Activated CD4-positive, alpha-beta memory T cell treated with anti-CD3 and anti-CD28 coated beads for 36 hours (primary cell): ENCODE measurements at regions of chr1 and their contacts with region 1.

Region 1: DNA sequence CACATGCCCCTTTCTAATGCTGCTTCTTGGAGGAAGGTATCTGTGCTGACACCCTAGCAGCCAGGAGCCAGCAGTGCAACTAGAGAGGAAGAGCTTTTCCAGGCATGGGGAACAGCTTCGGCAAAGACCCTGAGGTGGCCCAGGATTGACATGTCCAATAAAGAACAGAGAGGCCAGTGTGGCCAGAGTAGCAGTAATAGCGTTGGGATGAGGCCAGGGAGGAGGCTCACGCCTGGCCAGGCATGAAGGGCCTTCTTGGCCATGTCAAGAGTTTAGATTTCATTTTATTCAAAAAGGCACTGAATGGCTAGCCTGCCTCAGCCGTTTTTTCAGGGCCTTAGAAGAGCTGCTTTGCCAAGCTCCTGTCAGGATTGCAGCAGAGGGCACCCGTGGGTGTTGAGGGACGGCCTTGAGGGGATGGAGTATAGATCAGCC is 16.3 kb upstream of the ADAMTSL4 start:
- DNase-seq: no peak
- H3K4me3 Mint-ChIP-seq: no peak overlapping the region
- H3K27ac Mint-ChIP-seq: no peak overlapping the region
- H3K4me1 Mint-ChIP-seq: no peaks in the 10 kb centered on the region
- H3K27me3 Mint-ChIP-seq: no peaks in the 10 kb centered on the region

Region 2: DNA sequence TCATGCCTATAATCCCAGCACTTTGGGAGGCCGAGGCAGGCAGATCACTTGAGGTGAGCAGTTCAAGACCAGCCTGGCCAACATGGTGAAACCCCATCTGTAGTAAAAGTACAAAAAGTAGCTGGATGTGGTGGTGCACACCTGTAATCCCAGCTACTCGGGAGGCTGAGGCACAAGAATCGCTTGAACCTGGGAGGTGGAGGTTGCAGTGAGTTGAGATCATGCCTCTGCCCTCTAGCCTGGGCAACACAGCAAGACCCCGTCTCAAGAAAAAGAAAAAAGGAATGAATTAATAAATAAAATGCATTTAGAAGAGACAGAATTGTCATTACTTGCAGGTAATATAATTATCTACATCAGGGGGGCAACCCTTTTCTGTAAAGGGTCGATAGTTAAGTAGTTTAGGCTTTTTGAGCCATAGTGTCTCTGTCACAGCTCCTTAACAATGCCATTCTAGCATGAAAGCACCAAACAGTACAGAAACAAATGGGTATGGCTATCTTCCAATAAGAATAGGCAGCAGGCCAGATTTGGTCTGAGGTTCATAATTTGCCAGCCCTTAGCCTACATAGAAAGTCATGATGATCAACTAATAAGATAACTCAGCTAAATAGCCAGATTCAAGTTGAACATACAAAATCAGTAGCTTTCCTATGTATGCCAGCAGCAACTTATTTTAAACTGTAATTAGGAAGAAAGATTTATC is 112.2 kb before region 1 on chr1:
- CTCF ChIA-PET with region 1: no interaction called
- POLR2A ChIA-PET with region 1: no interaction called
- intact Hi-C with region 1: no loop called
- DNase-seq: no peak
- H3K4me3 Mint-ChIP-seq: no peak overlapping the region
- H3K27ac Mint-ChIP-seq: no peak overlapping the region
- H3K4me1 Mint-ChIP-seq: peaks cover 24% of the 10 kb centered on the region
- H3K27me3 Mint-ChIP-seq: no peaks in the 10 kb centered on the region

Region 3: GRCh38 chr1:150464422-150464826 is 68.5 kb before region 1 on chr1:
- CTCF ChIA-PET with region 1: interaction called, 15 read pairs
- POLR2A ChIA-PET with region 1: no interaction called
- intact Hi-C with region 1: loop called (anchors 1 kb)
- DNase-seq: peak; percentile 76
- H3K4me3 Mint-ChIP-seq: no peak overlapping the region
- H3K27ac Mint-ChIP-seq: peak overlapping the region; percentile 11
- H3K4me1 Mint-ChIP-seq: peaks cover 4% of the 10 kb centered on the region
- H3K27me3 Mint-ChIP-seq: no peaks in the 10 kb centered on the region

Region 4: DNA sequence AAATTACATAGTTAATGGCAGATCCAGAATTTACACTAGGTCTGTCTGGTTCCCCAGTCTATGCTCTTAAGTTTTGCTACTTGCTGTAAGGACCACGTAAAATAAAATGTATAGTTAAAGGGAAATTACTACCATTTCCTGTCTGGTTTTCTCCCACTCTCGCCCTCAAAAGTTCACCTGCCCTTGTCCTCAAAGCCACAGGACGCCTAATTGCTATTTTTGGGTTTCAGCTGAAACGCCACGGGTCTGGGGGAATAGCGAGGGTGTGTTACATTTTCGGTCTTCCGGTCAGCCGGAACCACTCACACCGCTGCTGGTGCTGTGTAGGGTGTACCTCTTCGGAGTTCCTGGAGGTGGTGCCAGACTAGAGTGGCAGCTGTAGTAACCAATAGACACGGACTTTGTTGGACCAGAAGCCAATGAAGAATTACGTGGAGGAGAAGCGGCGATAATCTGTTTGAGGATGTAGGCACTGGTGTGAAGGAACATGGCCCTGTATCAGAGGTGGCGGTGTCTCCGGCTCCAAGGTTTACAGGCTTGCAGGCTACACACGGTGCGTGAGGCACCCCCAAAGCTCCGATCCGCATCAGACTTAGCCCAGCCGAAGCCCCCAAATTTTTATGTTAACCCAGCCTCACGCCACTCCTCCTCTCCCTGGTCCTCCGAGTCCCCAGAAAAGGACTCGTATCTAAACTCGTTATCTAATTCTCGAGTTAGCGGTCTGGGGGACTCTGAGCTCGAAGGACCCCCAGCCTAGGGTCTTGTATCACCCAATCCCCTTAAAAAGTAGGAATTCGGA is 45.7 kb before region 1 on chr1 and contains the start of gene TARS2:
- CTCF ChIA-PET with region 1: interaction called, 10 read pairs
- POLR2A ChIA-PET with region 1: no interaction called
- intact Hi-C with region 1: no loop called
- DNase-seq: peak; percentile 98
- H3K4me3 Mint-ChIP-seq: peak within 1 kb of the TSS; percentile 83
- H3K27ac Mint-ChIP-seq: peak within 1 kb of the TSS; percentile 90
- H3K4me1 Mint-ChIP-seq: peaks cover 21% of the 10 kb centered on the region
- H3K27me3 Mint-ChIP-seq: no peaks in the 10 kb centered on the region
- total RNA-seq, gene TARS2: 46.3 to 51.7 TPM

Region 5: GRCh38 chr1:150596095-150596892 is 63.4 kb after region 1 on chr1:
- CTCF ChIA-PET with region 1: no interaction called
- POLR2A ChIA-PET with region 1: no interaction called
- intact Hi-C with region 1: no loop called
- DNase-seq: no peak
- H3K4me3 Mint-ChIP-seq: no peak overlapping the region
- H3K27ac Mint-ChIP-seq: peak overlapping the region; percentile 47
- H3K4me1 Mint-ChIP-seq: peaks cover 15% of the 10 kb centered on the region
- H3K27me3 Mint-ChIP-seq: no peaks in the 10 kb centered on the region